ENCODE measurements at regions of chr11 and their contacts with region 1.

Region 1: DNA sequence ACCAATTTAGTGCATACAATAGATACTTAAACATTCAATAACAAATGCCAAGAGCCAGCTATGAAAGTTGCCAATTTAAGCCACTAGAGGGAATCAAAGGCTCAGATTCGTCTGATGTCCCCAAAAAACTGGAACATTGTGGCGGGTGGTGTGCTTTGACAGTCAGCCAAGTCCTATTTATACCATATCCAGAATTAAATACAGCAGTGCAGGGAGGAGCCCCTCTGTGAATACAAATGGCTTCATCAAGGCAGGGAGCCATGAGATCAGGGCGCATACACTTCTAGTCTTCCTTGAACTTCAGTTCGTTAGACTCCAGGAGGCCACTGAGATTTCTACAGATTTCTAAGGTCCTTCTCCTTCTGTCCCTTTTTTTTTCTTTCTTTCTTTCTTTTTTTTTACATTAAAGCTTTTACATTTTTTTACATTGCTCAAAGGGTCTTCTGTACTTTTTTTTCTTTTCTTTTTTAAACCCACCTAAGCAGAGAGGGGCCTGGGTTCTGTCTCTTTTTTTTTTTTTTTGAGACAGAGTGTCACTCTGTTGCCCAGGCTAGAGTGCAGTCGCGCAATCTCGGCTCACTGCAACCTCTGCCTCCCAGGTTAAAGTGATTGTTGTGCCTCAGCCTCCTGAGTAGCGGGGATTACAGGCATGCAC is 41.5 kb upstream of the HSPA8 start:
- DNase-seq: peak; percentile 81
- H3K4me3 ChIP-seq: no peak overlapping the region
- CTCF ChIP-seq: peak; percentile 68

Region 2: DNA sequence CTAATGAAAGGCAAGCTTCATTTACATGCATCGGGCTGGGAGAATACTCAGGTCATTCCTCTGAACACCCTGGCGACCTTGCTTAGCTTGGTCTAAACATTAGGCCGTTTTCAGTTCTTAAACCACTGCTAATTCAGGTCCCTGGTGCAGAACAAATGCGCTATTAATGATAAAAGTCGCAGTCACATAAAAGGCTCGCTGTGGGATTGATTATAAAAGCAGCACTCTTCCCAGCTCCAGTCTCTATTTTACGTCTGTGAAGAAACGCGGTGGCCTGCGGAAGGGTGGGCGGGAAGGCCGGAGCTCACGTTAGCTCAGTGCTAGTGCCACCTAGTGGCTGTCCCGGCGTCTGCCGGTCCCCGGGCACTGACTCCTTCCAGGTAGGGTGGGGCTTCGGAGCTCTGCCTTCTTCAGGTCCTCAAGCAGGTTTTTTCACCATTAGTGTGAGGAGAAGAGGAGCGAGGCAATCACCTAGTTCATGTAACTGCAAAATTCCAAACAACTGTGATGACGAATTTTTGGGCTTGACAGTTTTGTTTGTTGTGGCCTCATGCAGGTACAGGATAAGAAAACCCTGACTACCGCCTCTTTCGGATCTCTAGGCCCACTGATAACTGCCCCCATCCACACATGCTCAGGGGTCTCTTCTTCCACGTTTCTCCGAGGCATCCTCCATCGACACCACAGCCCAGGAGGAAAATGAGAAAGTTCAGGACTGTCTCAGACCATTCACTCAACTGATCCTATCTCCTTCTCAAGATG is 158.1 kb after region 1 on chr11:
- in situ Hi-C with region 1: loop called (anchors 25 kb)
- DNase-seq: peak; percentile 76
- H3K4me3 ChIP-seq: no peak overlapping the region
- CTCF ChIP-seq: peak; percentile 96

Region 3: DNA sequence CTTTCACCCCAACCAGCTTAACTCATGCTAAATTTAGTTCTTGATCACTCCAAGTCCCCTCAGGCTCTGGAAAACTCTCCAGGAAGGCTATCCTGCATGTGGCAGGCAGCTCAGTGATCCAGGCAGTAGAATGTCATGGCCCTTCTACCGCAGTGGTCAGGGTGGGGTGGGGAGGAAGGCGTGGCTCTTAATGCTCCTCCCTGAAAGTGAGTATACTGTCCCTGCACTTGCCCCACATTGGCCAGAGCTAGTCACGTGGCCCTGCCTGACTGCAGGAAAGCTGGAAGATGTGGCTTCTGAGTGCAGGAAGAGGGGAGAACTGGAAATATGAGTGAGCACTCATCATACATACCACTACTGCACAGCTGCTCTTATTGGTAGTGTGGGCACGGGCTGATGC is 428.7 kb after region 1 on chr11:
- in situ Hi-C with region 1: no loop called
- DNase-seq: no peak
- H3K4me3 ChIP-seq: no peak overlapping the region
- CTCF ChIP-seq: no peak